Activated CD4-positive, alpha-beta T cell treated with anti-CD3 and anti-CD28 coated beads for 36 hours (primary cell): ENCODE measurements at regions of chr1 and their contacts with region 1.

Region 1: DNA sequence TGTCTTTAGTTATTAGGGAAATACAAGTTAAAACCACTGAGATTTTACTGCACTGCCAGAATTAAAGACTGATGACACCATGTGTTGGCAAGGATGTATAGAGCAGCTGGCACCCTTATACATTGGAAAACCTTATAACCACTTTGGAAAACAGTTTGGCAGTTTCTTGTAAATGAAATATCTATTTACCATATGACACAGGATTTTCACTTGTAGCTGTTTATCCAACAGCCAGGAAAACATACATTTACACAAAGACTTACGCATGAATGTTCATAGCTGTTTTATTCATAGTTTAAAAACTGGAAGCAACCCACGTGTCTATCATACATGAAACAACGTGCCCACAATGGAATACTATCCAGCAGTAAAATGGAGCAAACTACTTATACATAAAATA is 45.3 kb downstream of the PRRC2C start:
- DNase-seq: no peak
- ATAC-seq: no peak
- H3K4me3 Mint-ChIP-seq: no peak overlapping the region
- H3K27ac Mint-ChIP-seq: no peak overlapping the region
- H3K4me1 Mint-ChIP-seq: peaks cover 7% of the 10 kb centered on the region
- H3K27me3 Mint-ChIP-seq: no peaks in the 10 kb centered on the region

Region 2: DNA sequence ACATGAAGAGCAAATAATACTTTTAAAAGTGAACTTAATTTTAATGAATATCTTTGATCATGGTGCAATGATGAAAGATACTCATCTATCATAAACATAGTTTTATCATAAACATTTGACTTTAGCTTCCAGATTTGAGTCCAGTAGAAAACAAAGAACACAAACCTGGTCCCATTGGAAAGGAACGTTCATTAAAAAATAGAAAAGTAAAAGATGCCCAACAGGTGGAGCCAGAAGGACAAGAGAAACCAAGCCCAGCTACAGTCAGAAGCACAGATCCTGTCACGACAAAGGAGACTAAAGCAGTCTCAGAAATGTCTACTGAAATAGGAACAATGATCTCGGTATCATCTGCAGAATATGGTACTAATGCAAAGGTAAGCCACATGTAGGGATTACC is 35.8 kb after region 1 on chr1:
- CTCF ChIA-PET with region 1: no interaction called
- POLR2A ChIA-PET with region 1: no interaction called
- intact Hi-C with region 1: loop called in 1 of 2 experiments (anchors 5 kb)
- DNase-seq: no peak
- ATAC-seq: no peak
- H3K4me3 Mint-ChIP-seq: no peak overlapping the region
- H3K27ac Mint-ChIP-seq: no peak overlapping the region
- H3K4me1 Mint-ChIP-seq: peaks cover 12% of the 10 kb centered on the region
- H3K27me3 Mint-ChIP-seq: no peaks in the 10 kb centered on the region

Region 3: DNA sequence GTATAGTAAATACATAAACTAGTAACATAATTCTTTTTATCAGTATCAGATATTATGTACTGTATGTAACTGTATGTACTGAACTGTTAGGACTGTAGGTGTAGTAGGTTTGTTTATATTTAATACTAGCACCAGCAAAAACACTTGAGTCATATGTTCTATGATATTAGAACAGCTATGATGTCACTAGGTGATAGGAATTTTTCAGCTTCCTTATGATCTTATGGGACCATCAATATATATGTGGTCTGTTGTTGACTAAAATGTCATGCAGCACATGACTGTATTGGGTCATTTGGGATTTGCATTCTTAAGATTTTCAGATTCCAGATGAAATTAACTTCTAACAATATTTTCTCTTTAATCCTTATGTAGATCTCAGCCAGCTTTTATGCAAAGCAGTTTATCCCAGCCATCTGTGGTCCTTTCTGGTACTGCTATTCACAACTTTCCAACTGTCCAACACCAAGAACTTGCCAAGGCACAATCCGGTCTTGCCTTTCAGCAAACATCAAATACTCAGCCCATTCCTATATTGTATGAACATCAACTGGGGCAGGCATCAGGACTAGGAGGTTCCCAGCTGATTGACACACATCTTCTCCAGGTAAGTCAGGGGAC is 53.0 kb after region 1 on chr1:
- CTCF ChIA-PET with region 1: interaction called, 4 read pairs
- POLR2A ChIA-PET with region 1: no interaction called
- intact Hi-C with region 1: loop called in 1 of 2 experiments (anchors 5 kb)
- DNase-seq: no peak
- ATAC-seq: no peak
- H3K4me3 Mint-ChIP-seq: no peak overlapping the region
- H3K27ac Mint-ChIP-seq: peak overlapping the region; percentile 28
- H3K4me1 Mint-ChIP-seq: peaks cover 18% of the 10 kb centered on the region
- H3K27me3 Mint-ChIP-seq: no peaks in the 10 kb centered on the region